AG04450 (cell line): ENCODE measurements at regions of chr17 and their contacts with region 1.

Region 1: DNA sequence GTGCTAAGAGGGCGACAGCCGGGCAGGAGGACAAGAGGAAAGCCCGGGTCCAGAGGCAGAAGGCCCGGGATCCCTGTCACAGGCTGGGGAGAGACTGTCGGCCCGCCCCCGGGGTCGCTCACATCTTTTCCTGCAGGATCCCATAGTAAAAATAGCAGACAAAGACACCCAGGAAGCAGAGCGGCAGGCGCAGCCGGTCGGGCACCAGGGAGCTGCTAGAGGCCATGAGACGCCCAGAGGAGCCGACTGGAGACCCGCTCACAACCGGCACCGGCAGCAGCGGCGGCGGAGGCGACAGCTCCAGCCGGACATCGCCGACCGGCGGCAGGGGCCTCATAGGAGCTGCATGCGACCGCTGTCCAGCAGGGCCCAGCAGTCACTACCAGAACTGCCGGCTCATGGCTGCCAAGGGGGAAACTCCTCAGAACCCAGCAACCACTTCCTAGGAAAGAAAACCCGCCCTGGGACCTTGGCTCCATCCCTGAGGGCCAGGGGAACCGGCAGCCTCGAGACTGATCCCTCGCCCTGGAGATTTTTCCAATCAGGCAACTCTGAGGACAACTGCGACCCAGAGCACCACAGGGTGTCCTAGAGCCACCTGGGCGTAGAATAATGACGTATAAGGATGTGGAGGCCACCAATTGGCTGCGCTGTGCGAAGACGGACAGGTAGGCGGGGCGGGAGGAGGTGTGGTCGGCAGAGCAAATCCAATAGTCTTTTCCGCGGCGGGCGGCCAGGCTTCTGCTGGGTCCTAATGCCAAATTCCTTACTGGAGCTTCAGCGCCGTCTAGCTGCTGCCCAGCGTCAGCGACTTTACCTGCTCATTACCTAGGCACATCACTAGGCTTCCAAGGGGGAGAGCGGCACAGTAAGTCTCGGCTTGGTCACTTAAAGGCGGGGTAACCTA is at the start of gene SLC35B1:
- DNase-seq: peak; percentile 97
- H3K4me3 ChIP-seq: peak within 1 kb of the TSS; percentile 95
- H3K27ac ChIP-seq: peak within 1 kb of the TSS; percentile 92
- H3K27me3 ChIP-seq: no peaks in the 10 kb centered on the region
- CTCF ChIP-seq: peak; percentile 94
- polyA plus RNA-seq, gene SLC35B1: 99.1 and 109 TPM in 2 replicates

Region 2: DNA sequence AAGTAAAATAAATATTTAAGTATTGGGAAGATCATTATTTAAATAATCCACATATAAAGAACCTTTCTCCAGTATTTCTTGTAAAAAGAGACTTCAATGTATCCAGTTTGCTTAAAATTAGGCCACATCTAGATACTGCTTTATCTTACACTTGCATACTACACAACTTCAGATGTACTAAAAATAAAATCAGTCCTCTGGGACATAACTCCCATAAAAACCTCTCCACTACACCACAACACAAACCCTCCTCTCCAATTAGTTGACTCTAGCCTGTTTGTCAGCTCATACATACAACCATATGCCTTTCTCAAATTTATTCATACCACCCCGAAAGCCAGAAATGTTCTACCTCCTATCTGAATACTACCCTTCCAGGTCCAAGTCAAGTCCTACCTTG is 51.6 kb before region 1 on chr17:
- CTCF ChIA-PET with region 1: no interaction called
- POLR2A ChIA-PET with region 1: no interaction called
- DNase-seq: no peak
- H3K4me3 ChIP-seq: no peak overlapping the region
- H3K27ac ChIP-seq: no peak overlapping the region
- H3K27me3 ChIP-seq: no peaks in the 10 kb centered on the region
- CTCF ChIP-seq: no peak

Region 3: DNA sequence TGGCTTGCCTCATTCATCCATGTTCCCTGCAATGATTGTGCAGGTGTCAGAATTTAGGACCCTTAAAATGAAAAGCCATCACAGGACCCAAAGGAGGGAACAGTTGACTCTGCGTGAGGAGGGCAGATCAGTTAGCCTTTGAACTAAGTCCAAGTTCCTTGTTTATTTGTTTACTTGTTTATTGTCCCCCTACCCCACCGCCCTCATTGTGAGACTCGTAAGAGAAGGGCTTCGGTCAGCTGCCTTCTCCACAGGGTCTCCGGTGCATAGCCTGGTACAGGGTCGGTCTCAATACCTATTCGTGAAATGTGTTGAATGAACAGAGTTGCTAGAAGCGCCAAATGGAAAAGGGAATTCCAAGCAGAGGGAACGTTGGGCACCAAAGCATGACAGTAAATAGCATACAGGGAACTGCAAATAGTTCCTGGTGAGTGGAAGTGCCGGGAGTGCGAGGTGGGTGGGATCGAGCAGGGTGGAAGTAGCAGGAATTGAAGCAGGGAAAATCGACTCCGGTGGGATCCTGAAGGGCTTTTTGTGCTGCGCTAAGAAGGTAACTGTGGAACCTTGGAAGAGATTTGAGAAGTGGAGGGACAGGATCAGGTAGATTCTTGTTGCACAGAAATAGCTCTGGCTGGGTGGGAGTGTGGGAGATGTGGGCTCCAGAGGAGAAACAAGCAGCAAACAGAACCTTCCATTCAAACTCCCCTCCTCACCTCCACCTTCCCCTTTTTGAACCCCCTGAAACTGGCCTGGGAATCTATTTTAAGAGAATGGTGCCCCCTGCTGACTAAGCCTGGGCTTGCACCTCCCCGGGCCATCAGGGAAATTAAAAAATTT is 12.8 kb before region 1 on chr17:
- CTCF ChIA-PET with region 1: interaction called, 11 read pairs
- POLR2A ChIA-PET with region 1: interaction called, 4 read pairs
- DNase-seq: no peak
- H3K4me3 ChIP-seq: no peak overlapping the region
- H3K27ac ChIP-seq: no peak overlapping the region
- H3K27me3 ChIP-seq: no peaks in the 10 kb centered on the region
- CTCF ChIP-seq: peak; percentile 95

Region 4: GRCh38 chr17:50129728-50130558 is 422.1 kb after region 1 on chr17 and contains the start of gene SAMD14:
- CTCF ChIA-PET with region 1: no interaction called
- POLR2A ChIA-PET with region 1: interaction called, 10 read pairs
- DNase-seq: no peak
- H3K4me3 ChIP-seq: peak within 1 kb of the TSS; percentile 67
- H3K27ac ChIP-seq: peak within 1 kb of the TSS; percentile 52
- H3K27me3 ChIP-seq: no peaks in the 10 kb centered on the region
- CTCF ChIP-seq: no peak
- polyA plus RNA-seq, gene SAMD14: 3.5 and 5.3 TPM in 2 replicates